ENCODE measurements at regions of chr15 and their contacts with region 1.

Region 1: GRCh38 chr15:90320061-90320884 is 31.8 kb upstream of the ZNF774 start:
- DNase-seq: peak; percentile 71
- H3K4me3 ChIP-seq: peak overlapping the region; percentile 10; the same call in 1 of the 2 replicates
- H3K27ac ChIP-seq: no peak overlapping the region
- H3K27me3 ChIP-seq: no peaks in the 10 kb centered on the region
- CTCF ChIP-seq: peak; percentile 100

Region 2: DNA sequence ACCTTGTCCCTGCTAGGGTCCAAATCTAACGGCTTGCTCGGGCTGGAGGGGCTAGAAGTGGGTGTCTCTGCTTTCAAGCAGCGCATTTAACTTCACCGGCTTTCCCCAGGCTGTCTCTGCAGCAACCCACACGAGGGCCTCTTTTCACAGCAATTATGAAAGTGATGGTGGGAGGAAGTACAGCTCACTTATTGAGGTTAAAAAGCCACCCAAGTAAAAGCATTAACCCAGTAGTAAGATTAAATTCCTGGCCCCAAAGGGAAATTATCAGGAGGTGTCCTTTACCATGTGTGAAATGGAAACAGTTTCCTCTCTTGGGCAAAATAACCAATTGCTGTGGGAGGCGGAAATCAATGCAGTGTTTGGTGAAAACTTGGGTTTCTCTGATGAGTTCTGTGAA is 13.7 kb before region 1 on chr15:
- CTCF ChIA-PET with region 1: interaction called, 54 read pairs
- POLR2A ChIA-PET with region 1: no interaction called
- DNase-seq: no peak
- H3K4me3 ChIP-seq: no peak overlapping the region
- H3K27ac ChIP-seq: no peak overlapping the region
- H3K27me3 ChIP-seq: no peaks in the 10 kb centered on the region
- CTCF ChIP-seq: no peak

Region 3: GRCh38 chr15:90412356-90413194 is 92.3 kb after region 1 on chr15:
- CTCF ChIA-PET with region 1: interaction called, 10 read pairs
- POLR2A ChIA-PET with region 1: interaction called, 4 read pairs
- DNase-seq: no peak
- H3K4me3 ChIP-seq: no peak overlapping the region
- H3K27ac ChIP-seq: peak overlapping the region; percentile 59
- H3K27me3 ChIP-seq: no peaks in the 10 kb centered on the region
- CTCF ChIP-seq: no peak

Region 4: DNA sequence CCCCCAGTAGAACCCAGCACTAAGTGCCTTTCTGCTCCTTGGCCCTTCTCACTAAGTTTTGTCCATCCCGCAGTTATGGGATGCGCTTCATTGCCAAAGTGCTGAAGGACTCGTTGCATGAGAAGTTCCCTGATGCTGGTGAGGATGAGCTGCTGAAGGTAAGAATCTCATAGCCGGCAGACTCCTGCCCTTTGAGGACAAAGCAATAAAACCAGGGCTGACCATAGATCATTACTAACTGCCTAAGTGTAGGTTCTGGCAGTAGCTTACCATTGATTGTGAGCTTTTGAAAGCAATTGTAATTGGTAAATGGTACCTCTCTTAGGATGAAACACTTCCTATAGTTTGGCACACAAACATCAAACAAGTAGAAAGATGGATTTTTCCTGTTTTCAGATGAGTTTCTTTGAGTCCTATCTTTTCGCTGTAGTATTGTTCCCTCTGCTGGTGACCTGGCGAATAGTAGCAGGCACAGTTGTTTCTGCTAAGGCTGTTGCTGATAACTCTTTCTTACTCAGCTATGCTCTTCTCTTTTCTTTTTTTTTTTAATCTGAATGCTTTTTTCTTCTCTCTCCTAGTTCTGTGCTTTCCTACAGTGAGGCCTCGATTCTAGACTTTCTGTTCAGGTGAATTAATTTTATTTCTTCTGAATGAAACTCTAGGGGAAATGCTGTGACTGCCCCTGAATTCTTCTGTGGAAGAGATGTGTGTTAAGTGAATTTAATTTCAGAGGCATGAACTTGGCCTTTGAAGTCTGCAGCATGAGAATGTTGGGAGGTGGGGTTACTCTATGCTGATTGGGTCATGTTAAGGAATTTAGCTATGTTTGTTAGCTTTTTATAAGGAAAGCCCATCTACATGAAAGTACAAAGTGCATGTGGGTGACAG is 162.1 kb after region 1 on chr15:
- CTCF ChIA-PET with region 1: interaction called, 237 read pairs
- POLR2A ChIA-PET with region 1: interaction called, 4 read pairs
- DNase-seq: peak; percentile 32
- H3K4me3 ChIP-seq: no peak overlapping the region
- H3K27ac ChIP-seq: no peak overlapping the region
- H3K27me3 ChIP-seq: no peaks in the 10 kb centered on the region
- CTCF ChIP-seq: peak; percentile 88

Region 5: GRCh38 chr15:90512981-90513380 is 192.7 kb after region 1 on chr15:
- CTCF ChIA-PET with region 1: interaction called, 12 read pairs
- POLR2A ChIA-PET with region 1: no interaction called
- DNase-seq: no peak
- H3K4me3 ChIP-seq: no peak overlapping the region
- H3K27ac ChIP-seq: no peak overlapping the region
- H3K27me3 ChIP-seq: no peaks in the 10 kb centered on the region
- CTCF ChIP-seq: no peak

Measured in AG04450 (cell line).